Caco-2 (cell line): ENCODE measurements at regions of chr16 and their contacts with region 1.

Region 1: DNA sequence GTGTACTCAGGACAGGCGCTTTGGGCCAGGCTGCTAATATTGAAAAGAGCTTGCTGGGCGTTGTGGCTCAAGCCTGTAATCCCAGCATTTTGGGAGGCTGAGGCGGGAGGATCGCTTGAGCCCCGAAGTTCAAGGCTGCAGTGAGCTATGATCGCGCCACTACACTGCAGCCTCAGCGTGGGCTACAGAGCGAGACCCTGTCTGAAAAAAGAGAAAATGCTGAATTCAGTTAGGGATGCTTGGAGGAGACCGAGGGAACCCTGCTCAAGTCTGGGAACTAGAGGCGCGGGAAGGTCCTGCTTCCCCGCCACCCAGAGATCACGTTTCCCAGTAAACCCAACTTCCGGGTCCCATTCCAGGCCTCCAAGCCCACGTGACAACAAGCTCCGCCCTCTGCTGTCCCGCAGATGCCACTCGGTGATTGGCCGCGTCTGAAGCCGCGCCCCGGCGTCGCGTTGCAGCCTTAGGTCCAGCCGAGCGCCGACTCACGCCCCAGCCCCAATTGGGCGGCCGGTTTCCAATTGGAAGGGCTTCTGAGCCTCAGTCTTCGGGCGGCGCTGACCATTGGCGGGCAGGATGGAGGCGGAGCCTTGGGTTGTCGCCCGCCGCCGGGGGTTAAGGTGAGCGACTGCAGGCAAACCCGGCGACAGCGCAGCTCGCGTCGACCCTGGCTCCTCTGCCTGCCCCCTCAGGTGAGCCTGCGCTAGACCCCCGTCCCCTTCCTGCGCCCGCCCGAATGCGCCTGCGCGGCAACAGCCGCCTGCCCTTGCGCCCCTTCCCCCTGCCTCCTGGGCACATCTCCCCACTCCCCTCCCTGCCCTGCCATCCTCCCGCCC is at the start of gene PHKG2:
- DNase-seq: peak; percentile 98
- H3K4me3 ChIP-seq: peak within 1 kb of the TSS; percentile 96
- H3K4me3 Mint-ChIP-seq: peak within 1 kb of the TSS; percentile 68
- H3K27ac Mint-ChIP-seq: peak within 1 kb of the TSS; percentile 64
- H3K4me1 ChIP-seq: peaks cover 11% of the 10 kb centered on the region
- H3K4me1 Mint-ChIP-seq: peaks cover 20% of the 10 kb centered on the region
- H3K27me3 ChIP-seq: no peaks in the 10 kb centered on the region
- H3K27me3 Mint-ChIP-seq: no peaks in the 10 kb centered on the region
- CTCF ChIP-seq: no peak
- total RNA-seq, gene PHKG2: 40.8 and 48.6 TPM in 2 replicates

Region 2: GRCh38 chr16:30509081-30509765 is 238.8 kb before region 1 on chr16:
- CTCF ChIA-PET with region 1: no interaction called
- POLR2A ChIA-PET with region 1: no interaction called
- intact Hi-C with region 1: no loop called
- DNase-seq: no peak
- H3K4me3 ChIP-seq: no peak overlapping the region
- H3K4me3 Mint-ChIP-seq: no peak overlapping the region
- H3K27ac Mint-ChIP-seq: no peak overlapping the region
- H3K4me1 ChIP-seq: no peaks in the 10 kb centered on the region
- H3K4me1 Mint-ChIP-seq: no peaks in the 10 kb centered on the region
- H3K27me3 ChIP-seq: no peaks in the 10 kb centered on the region
- H3K27me3 Mint-ChIP-seq: no peaks in the 10 kb centered on the region
- CTCF ChIP-seq: no peak

Region 3: GRCh38 chr16:30710971-30711370 is 37.0 kb before region 1 on chr16:
- CTCF ChIA-PET with region 1: no interaction called
- POLR2A ChIA-PET with region 1: no interaction called
- intact Hi-C with region 1: no loop called
- DNase-seq: no peak
- H3K4me3 ChIP-seq: no peak overlapping the region
- H3K4me3 Mint-ChIP-seq: no peak overlapping the region
- H3K27ac Mint-ChIP-seq: no peak overlapping the region
- H3K4me1 ChIP-seq: no peaks in the 10 kb centered on the region
- H3K4me1 Mint-ChIP-seq: peaks cover 6% of the 10 kb centered on the region
- H3K27me3 ChIP-seq: no peaks in the 10 kb centered on the region
- H3K27me3 Mint-ChIP-seq: no peaks in the 10 kb centered on the region
- CTCF ChIP-seq: no peak

Region 4: DNA sequence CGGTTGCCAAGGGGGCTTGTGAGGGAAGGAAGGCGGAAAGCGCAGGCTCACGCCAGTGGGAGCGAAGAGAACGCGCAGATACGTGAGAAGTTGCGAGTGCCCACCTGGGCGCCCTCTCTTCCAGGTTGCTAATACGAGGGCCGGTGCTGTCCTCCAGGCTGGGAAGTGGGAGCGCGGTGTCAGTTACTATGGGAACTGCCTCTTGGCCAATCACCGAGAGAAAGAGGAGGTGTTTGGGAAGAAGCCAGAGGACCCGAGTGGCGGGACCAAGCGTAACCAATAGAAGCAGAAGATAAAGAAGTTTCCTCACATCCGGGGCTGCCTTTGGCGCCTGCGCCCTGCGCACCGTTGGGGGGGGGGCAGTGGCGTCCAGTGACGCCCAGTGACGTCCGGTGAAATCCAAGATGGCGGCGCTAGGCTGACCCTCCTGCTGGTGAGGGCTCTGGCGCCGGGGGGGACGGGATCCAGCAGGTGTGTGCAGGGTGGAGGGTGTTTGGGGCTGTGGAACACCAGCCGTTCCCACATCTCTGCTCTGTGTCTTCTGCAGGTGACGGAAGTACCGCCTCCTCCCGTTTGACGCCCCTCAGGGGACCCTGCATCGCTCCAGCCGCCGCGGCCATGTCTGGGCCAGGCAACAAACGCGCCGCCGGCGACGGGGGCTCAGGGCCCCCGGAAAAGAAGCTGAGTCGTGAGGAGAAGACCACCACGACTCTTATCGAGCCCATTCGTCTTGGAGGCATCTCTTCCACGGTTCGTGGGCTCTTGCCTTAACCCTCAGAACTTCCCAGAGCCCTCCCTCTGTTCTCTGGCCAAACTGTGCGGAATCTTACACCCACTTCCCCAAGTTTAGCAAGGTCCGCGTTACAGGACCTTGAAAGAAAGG is 14.2 kb after region 1 on chr16 and contains the starts of genes CFAP119 and RNF40:
- CTCF ChIA-PET with region 1: no interaction called
- POLR2A ChIA-PET with region 1: interaction called, 4 read pairs
- intact Hi-C with region 1: loop called (anchors 2 kb)
- DNase-seq: peak; percentile 96
- H3K4me3 ChIP-seq: peak within 1 kb of the TSS; percentile 84
- H3K4me3 Mint-ChIP-seq: peak within 1 kb of the TSS; percentile 87
- H3K27ac Mint-ChIP-seq: peak within 1 kb of the TSS; percentile 73
- H3K4me1 ChIP-seq: peaks cover 15% of the 10 kb centered on the region; the same call in 1 of the 2 replicates
- H3K4me1 Mint-ChIP-seq: peaks cover 4% of the 10 kb centered on the region
- H3K27me3 ChIP-seq: no peaks in the 10 kb centered on the region
- H3K27me3 Mint-ChIP-seq: no peaks in the 10 kb centered on the region
- CTCF ChIP-seq: no peak
- total RNA-seq, gene CFAP119: 4.0 and 4.5 TPM in 2 replicates
- total RNA-seq, gene RNF40: 94.0 and 97.6 TPM in 2 replicates

Region 5: GRCh38 chr16:30775392-30776188 is 27.6 kb after region 1 on chr16:
- CTCF ChIA-PET with region 1: no interaction called
- POLR2A ChIA-PET with region 1: interaction called, 10 read pairs
- intact Hi-C with region 1: no loop called
- DNase-seq: peak; percentile 86 to 87
- H3K4me3 ChIP-seq: peak overlapping the region; percentile 70
- H3K4me3 Mint-ChIP-seq: peak overlapping the region; percentile 75
- H3K27ac Mint-ChIP-seq: peak overlapping the region; percentile 91
- H3K4me1 ChIP-seq: peaks cover 12% of the 10 kb centered on the region
- H3K4me1 Mint-ChIP-seq: peaks cover 10% of the 10 kb centered on the region
- H3K27me3 ChIP-seq: no peaks in the 10 kb centered on the region
- H3K27me3 Mint-ChIP-seq: no peaks in the 10 kb centered on the region
- CTCF ChIP-seq: no peak

Region 6: GRCh38 chr16:30786936-30787612 is 39.1 kb after region 1 on chr16 and contains the start of gene ZNF629:
- CTCF ChIA-PET with region 1: no interaction called
- POLR2A ChIA-PET with region 1: no interaction called
- intact Hi-C with region 1: no loop called
- DNase-seq: peak; percentile 79 to 82
- H3K4me3 ChIP-seq: peak within 1 kb of the TSS; percentile 72
- H3K4me3 Mint-ChIP-seq: peak within 1 kb of the TSS; percentile 93
- H3K27ac Mint-ChIP-seq: peak within 1 kb of the TSS; percentile 91
- H3K4me1 ChIP-seq: peaks cover 14% of the 10 kb centered on the region; the same call in 1 of the 2 replicates
- H3K4me1 Mint-ChIP-seq: no peaks in the 10 kb centered on the region
- H3K27me3 ChIP-seq: no peaks in the 10 kb centered on the region
- H3K27me3 Mint-ChIP-seq: no peaks in the 10 kb centered on the region
- CTCF ChIP-seq: no peak
- total RNA-seq, gene ZNF629: 18.9 and 20.6 TPM in 2 replicates

Region 7: DNA sequence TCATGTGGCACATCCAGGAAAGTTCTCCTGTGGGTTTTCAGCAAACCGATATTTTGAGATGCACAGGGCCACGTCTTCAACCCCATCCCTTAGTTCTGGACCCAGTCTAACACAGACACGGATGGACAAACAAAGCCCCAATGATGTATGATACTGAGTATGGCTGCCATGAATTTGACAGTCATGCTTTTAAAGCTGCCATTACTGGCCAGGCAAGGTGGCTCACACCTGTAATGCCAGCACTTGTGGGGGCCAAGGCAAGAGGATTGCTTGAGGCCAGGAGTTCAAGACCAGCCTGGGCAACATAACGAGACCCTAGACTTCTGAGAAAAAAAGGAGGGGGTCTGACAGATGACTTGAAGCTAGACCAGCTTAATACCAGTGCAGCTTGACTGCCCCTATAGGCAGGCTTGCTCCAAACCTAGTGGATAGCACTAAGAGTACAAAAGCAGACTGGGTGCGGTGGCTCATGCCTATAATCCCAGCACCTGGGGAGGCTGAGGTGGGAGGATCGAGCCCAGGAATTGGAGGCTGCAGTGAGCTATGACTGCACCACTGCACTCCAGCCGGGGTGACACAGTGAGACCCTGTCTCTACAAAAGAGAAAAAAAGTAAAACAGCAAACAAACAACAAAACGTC is 49.8 kb after region 1 on chr16:
- CTCF ChIA-PET with region 1: no interaction called
- POLR2A ChIA-PET with region 1: no interaction called
- intact Hi-C with region 1: loop called (anchors 1 kb)
- DNase-seq: no peak
- H3K4me3 ChIP-seq: no peak overlapping the region
- H3K4me3 Mint-ChIP-seq: no peak overlapping the region
- H3K27ac Mint-ChIP-seq: no peak overlapping the region
- H3K4me1 ChIP-seq: no peaks in the 10 kb centered on the region
- H3K4me1 Mint-ChIP-seq: no peaks in the 10 kb centered on the region
- H3K27me3 ChIP-seq: no peaks in the 10 kb centered on the region
- H3K27me3 Mint-ChIP-seq: no peaks in the 10 kb centered on the region
- CTCF ChIP-seq: peak in 1 of 2 experiments; percentile 16

Region 8: GRCh38 chr16:30922960-30923535 is 175.0 kb after region 1 on chr16:
- CTCF ChIA-PET with region 1: no interaction called
- POLR2A ChIA-PET with region 1: no interaction called
- intact Hi-C with region 1: loop called (anchors 1 kb)
- DNase-seq: peak; percentile 97 to 99
- H3K4me3 ChIP-seq: peak overlapping the region; percentile 49
- H3K4me3 Mint-ChIP-seq: peak overlapping the region; percentile 100
- H3K27ac Mint-ChIP-seq: peak overlapping the region; percentile 100
- H3K4me1 ChIP-seq: no peaks in the 10 kb centered on the region
- H3K4me1 Mint-ChIP-seq: no peaks in the 10 kb centered on the region
- H3K27me3 ChIP-seq: no peaks in the 10 kb centered on the region
- H3K27me3 Mint-ChIP-seq: no peaks in the 10 kb centered on the region
- CTCF ChIP-seq: no peak